RWPE1 (cell line): ENCODE measurements at regions of chr3 and their contacts with region 1.

Region 1: GRCh38 chr3:149120051-149120972 is 9.1 kb upstream of the HPS3 start:
- DNase-seq: peak; percentile 64
- H3K27ac ChIP-seq: no peak overlapping the region
- CTCF ChIP-seq: peak; percentile 66

Region 2: GRCh38 chr3:148466143-148466542 is 654.2 kb before region 1 on chr3:
- CTCF ChIA-PET with region 1: no interaction called
- POLR2A ChIA-PET with region 1: no interaction called
- DNase-seq: no peak
- H3K27ac ChIP-seq: no peak overlapping the region
- CTCF ChIP-seq: no peak

Region 3: GRCh38 chr3:149273096-149273751 is 152.9 kb after region 1 on chr3:
- CTCF ChIA-PET with region 1: interaction called, 29 read pairs
- POLR2A ChIA-PET with region 1: no interaction called
- DNase-seq: peak; percentile 84
- H3K27ac ChIP-seq: no peak overlapping the region
- CTCF ChIP-seq: peak; percentile 96

Region 4: DNA sequence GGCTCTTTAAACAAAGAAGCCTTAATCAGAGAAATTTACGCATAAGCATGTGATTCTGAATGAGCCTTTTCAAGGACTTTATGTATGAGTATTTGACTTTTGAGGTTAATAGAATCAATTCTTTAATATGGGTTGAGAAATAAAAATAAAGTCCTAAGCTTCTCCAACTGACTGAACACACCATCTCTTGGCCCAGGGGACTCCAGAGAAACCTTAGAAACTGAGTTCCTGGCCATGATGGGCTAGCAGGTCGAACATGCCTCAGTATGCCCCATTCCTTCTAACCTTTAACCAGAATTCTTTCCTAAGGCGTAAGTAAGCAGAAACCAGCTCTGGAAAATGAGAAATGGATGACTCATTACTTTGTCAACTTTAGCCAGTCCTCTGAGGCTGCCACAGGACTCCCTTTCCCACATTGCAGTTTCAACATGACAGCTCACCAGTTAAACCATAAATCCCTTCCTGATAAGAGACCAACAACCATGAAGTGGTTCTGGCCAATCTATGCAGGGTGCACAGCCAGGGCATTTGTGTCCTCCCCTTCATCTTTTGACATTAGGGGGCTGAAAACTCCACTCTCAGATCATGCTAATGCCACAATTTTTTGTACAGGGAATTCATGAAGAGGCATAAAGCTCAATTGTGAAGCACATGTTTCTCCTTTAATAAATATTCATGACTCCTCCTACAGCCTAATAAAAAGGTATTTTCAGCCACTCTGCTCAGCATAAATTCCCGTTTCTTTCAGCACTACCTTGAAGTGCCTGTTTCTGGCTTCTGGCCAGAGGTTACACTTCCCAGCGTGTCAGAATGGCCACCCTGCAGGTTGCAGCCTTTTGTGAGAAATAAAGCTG is 179.9 kb after region 1 on chr3:
- CTCF ChIA-PET with region 1: no interaction called
- POLR2A ChIA-PET with region 1: no interaction called
- DNase-seq: peak; percentile 80
- H3K27ac ChIP-seq: no peak overlapping the region
- CTCF ChIP-seq: no peak

Region 5: GRCh38 chr3:149480325-149481017 is 360.2 kb after region 1 on chr3:
- CTCF ChIA-PET with region 1: interaction called, 10 read pairs
- POLR2A ChIA-PET with region 1: no interaction called
- DNase-seq: peak; percentile 66
- H3K27ac ChIP-seq: no peak overlapping the region
- CTCF ChIP-seq: peak; percentile 68